ENCODE measurements at regions of chr2 and their contacts with region 1.

Region 1: DNA sequence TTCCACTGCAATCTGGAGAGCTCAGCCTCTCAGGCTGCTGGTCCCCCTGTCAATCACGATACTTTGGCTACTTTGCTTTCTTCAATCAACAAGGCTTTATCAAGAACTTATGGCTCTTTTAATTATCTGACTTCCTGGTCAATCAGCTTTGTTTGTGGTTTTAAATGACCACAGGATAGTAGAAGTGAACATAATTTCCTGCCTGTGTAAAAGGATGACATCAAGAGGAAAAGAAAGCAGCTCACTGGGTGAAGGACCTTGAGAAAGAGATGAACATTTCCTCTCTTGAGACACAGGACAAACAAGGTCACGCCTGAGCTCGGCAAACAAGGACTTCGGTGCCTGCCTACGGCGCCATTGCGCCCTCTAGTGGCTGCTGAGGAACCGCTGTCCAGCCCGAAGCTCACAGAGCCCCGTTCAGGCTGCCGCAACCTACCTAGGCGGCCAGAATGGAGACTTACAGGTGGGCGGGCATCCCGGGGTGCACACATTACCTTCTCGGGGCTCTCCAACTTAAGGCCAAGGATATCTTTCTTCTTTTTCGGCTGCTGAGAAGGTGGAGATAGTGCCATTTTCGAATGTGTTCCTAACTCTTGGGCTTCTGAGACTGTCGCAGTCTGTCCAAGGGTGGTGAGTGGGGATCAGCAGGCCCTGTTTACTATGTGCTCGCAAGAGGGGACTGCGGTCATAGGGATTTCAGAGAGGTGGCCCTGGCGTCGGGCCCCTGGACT is 54.0 kb downstream of the IL1RL2 start:
- DNase-seq: peak; percentile 82
- H3K4me3 ChIP-seq: no peak overlapping the region
- H3K27me3 ChIP-seq: no peaks in the 10 kb centered on the region
- CTCF ChIP-seq: peak; percentile 99

Region 2: DNA sequence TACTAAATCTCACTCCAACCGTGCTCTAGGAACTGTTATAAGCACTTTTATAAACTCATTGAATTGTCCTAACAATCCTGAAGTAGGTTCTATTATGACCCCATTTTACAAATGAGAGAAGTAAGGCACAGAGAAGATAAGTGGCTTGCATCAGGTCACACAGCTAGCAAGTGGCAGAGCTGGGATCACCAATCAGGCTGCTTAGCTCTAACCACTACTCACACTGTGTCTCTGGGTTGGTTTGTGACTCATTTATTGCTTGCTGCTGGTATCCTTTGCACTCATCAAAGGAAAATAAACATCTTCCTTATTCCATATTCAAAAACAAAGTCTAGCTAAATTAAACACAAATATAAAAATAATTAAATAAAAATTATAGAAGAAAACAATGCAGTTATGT is 291.5 kb before region 1 on chr2:
- CTCF ChIA-PET with region 1: no interaction called
- POLR2A ChIA-PET with region 1: no interaction called
- DNase-seq: no peak
- H3K4me3 ChIP-seq: no peak overlapping the region
- H3K27me3 ChIP-seq: no peaks in the 10 kb centered on the region
- CTCF ChIP-seq: no peak

Region 3: GRCh38 chr2:102005989-102006885 is 234.6 kb before region 1 on chr2:
- CTCF ChIA-PET with region 1: interaction called, 63 read pairs
- POLR2A ChIA-PET with region 1: no interaction called
- DNase-seq: no peak
- H3K4me3 ChIP-seq: no peak overlapping the region
- H3K27me3 ChIP-seq: no peaks in the 10 kb centered on the region
- CTCF ChIP-seq: peak; percentile 79

Region 4: DNA sequence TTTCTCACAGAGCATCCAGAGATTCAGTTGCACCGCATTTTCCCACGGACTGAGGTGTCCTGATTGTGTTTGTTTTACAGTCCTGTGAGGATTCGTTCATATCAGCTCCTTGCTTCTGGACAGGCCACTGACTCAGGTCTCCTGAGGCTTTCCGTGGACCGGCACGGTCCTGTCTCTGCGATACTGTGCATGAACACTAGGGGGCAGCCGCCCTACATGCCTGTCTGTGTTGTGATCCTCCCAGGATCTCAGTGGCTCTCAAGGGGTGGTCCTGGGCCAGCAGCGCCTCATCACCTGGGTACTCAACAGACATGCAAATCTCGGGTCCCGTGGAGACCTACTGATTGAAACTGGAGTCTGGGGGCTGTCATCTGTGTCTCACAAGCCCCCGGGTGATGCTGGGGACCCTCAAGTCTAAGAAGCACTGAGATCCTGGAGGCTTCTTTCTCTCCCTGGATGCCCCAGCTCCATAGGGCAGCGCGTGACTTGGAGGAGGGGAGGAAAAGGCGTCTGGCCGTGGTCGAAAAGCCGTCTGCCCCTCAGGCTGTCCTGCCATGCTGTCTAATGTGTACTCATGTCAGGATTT is 220.1 kb before region 1 on chr2:
- CTCF ChIA-PET with region 1: interaction called, 69 read pairs
- POLR2A ChIA-PET with region 1: no interaction called
- DNase-seq: no peak
- H3K4me3 ChIP-seq: no peak overlapping the region
- H3K27me3 ChIP-seq: no peaks in the 10 kb centered on the region
- CTCF ChIP-seq: peak; percentile 99

Region 5: GRCh38 chr2:102166189-102166845 is 74.5 kb before region 1 on chr2:
- CTCF ChIA-PET with region 1: interaction called, 16 read pairs
- POLR2A ChIA-PET with region 1: no interaction called
- DNase-seq: peak; percentile 76
- H3K4me3 ChIP-seq: no peak overlapping the region
- H3K27me3 ChIP-seq: no peaks in the 10 kb centered on the region
- CTCF ChIP-seq: peak; percentile 70

Region 6: GRCh38 chr2:102355526-102356380 is 114.9 kb after region 1 on chr2 and contains the start of gene IL18R1:
- CTCF ChIA-PET with region 1: interaction called, 16 read pairs
- POLR2A ChIA-PET with region 1: no interaction called
- DNase-seq: no peak
- H3K4me3 ChIP-seq: peak within 1 kb of the TSS; percentile 65
- H3K27me3 ChIP-seq: peaks cover 10% of the 10 kb centered on the region
- CTCF ChIP-seq: peak; percentile 61
- polyA plus RNA-seq, gene IL18R1: 0.11 TPM in 1 of 2 replicates, not detected in the other

Measured in BJ (cell line).